ENCODE measurements at regions of chr2 and their contacts with region 1.

Region 1: GRCh38 chr2:61750624-61751023 is 103.2 kb downstream of the FAM161A start:
- DNase-seq: no peak
- H3K4me3 ChIP-seq: no peak overlapping the region
- H3K27ac ChIP-seq: no peak overlapping the region
- H3K4me1 ChIP-seq: no peaks in the 10 kb centered on the region
- H3K27me3 ChIP-seq: no peaks in the 10 kb centered on the region
- CTCF ChIP-seq: no peak
- EP300 ChIP-seq: no peak
- POLR2A ChIP-seq: no peak

Region 2: GRCh38 chr2:61720911-61721310 is 29.7 kb before region 1 on chr2:
- in situ Hi-C with region 1: no loop called
- intact Hi-C with region 1: loop called (anchors 1 kb)
- DNase-seq: no peak
- H3K4me3 ChIP-seq: no peak overlapping the region
- H3K27ac ChIP-seq: no peak overlapping the region
- H3K4me1 ChIP-seq: no peaks in the 10 kb centered on the region
- H3K27me3 ChIP-seq: no peaks in the 10 kb centered on the region
- CTCF ChIP-seq: no peak
- EP300 ChIP-seq: no peak
- POLR2A ChIP-seq: no peak

Measured in transverse colon (tissue), 4 donors.